ENCODE measurements at regions of chr17 and their contacts with region 1.

Region 1: DNA sequence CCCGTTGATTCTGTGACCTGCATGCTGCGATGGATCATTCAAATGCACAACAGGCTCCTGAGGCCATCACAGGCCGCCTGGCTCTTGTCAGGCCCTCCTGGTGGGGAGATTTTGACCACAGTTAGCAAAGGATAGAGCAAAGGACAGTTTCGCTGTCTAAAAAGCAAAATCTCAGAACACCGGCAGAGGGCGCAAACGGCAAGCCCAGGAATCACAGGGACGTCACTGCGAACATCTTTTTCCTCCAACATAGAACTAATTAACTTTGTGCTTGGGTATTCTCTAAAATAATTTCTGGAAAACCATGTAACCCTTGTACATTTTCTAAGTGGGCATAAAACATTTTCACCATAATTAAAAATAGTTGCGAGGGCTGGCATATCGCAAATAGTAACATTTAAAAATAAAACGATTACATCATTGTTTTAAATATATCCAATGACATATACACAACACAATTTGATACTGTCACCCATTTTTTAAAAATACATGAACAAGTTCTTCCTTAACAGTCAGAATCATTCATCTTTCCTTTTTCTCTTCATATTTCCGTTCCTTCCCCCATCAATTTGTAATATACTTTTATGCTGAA is 19.7 kb upstream of the SLC47A1 start:
- DNase-seq: peak; percentile 74
- ATAC-seq: peak; percentile 63
- H3K4me3 Mint-ChIP-seq: no peak overlapping the region
- H3K27ac Mint-ChIP-seq: no peak overlapping the region
- H3K4me1 Mint-ChIP-seq: peaks cover 5% of the 10 kb centered on the region
- H3K27me3 Mint-ChIP-seq: peaks cover 3% of the 10 kb centered on the region

Region 2: DNA sequence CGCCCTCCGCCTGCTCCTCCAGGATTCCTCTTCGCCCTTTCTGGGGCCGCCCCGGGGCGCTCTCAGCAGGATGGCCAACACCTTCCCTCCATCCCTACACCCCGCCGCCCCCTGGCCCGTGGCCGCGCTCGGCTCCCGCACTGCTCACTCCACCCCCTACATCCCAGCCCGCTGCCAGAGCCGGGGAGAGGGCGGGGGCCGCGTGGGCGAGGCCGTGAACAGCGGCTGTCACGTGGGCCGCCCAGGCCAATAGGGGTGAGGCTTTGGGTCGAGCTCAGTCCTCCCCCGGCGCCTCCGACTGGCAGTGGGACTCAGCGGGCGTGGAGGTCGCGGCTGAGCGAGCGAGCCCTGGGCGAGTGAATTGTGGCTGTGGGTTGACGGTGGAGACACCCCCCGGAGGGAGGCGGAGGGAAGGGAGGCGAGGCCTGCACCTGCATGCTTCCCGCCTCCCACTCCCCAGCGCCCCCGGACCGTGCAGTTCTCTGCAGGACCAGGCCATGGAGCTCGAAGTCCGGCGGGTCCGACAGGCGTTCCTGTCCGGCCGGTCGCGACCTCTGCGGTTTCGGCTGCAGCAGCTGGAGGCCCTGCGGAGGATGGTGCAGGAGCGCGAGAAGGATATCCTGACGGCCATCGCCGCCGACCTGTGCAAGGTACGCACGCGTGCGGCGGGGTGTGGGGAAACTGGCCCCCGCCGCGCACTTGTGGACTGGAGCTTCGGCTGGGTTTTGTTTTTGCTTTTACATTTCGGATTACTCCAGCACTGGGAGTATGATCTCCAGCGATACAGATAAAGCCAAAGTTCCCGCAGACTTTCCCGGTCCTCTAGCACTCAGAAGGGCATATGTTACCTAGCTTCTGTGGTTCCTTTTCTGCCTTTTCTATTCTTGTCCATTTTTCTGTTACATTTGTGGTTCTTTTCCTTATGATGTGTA is 134.7 kb after region 1 on chr17 and contains the start of gene ALDH3A2:
- CTCF ChIA-PET with region 1: interaction called, 13 read pairs
- POLR2A ChIA-PET with region 1: no interaction called
- DNase-seq: peak; percentile 95
- ATAC-seq: peak; percentile 98
- H3K4me3 Mint-ChIP-seq: peak within 1 kb of the TSS; percentile 84
- H3K27ac Mint-ChIP-seq: peak within 1 kb of the TSS; percentile 92
- H3K4me1 Mint-ChIP-seq: peaks cover 40% of the 10 kb centered on the region
- H3K27me3 Mint-ChIP-seq: peaks cover 6% of the 10 kb centered on the region
- total RNA-seq, gene ALDH3A2: 25.1 to 27.4 TPM

Region 3: DNA sequence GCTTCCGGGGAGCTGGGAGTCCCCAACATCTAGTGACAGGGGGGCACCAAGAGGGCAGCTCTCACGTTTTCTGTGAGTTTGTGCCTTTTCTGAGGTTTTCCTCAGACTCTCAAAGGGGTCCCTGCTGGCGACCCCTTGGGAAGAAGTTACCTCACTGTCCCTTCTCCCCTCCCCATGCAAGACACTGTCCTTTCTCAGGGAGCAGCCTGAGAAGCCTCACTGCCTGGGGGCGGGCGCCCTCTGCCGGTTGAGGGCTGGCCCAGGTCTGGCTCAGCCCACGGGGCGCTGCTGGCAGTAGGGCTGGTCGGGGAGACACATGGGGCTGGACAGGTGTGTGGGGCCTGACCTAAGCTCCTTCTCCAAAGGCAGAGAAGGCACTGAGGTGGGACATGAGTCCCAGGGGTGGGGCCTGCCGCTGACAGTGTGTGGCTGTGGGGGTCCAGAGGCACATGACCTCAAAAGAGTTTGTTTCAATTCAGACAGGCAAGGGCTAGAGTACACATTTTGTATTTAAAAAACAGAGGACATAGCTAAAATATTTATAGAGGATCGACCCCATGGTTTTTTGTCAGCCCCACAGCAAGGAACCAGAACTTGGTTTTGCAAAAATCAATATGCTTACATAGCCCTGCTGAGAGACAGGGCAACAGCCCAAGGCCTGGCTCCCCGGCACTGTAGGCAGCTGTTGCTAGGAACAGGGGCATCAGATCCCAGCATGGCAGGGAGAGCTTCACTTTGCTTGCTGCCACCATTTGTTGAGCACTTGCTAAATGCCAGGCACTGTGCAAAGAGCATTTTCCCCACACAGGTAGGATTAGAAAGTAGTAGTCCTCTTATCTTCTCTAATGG is 252.7 kb after region 1 on chr17:
- CTCF ChIA-PET with region 1: interaction called, 29 read pairs
- POLR2A ChIA-PET with region 1: interaction called, 4 read pairs
- DNase-seq: peak; percentile 76
- ATAC-seq: peak; percentile 96
- H3K4me3 Mint-ChIP-seq: no peak overlapping the region
- H3K27ac Mint-ChIP-seq: no peak overlapping the region
- H3K4me1 Mint-ChIP-seq: peaks cover 8% of the 10 kb centered on the region
- H3K27me3 Mint-ChIP-seq: no peaks in the 10 kb centered on the region

Measured in activated CD8-positive, alpha-beta T cell treated with anti-CD3 and anti-CD28 coated beads, Interleukin-2, amount 10 ng/mL, durations not matched to agents 7 days and 5 days (primary cell).